ENCODE measurements at regions of chr14 and their contacts with region 1.

Region 1: GRCh38 chr14:24067145-24068082 is 3.9 kb upstream of the CPNE6 start:
- DNase-seq: no peak
- ATAC-seq: no peak
- H3K4me3 Mint-ChIP-seq: no peak overlapping the region
- H3K27ac Mint-ChIP-seq: no peak overlapping the region
- H3K4me1 Mint-ChIP-seq: peaks cover 7% of the 10 kb centered on the region
- H3K27me3 Mint-ChIP-seq: no peaks in the 10 kb centered on the region
- CTCF ChIP-seq: no peak

Region 2: DNA sequence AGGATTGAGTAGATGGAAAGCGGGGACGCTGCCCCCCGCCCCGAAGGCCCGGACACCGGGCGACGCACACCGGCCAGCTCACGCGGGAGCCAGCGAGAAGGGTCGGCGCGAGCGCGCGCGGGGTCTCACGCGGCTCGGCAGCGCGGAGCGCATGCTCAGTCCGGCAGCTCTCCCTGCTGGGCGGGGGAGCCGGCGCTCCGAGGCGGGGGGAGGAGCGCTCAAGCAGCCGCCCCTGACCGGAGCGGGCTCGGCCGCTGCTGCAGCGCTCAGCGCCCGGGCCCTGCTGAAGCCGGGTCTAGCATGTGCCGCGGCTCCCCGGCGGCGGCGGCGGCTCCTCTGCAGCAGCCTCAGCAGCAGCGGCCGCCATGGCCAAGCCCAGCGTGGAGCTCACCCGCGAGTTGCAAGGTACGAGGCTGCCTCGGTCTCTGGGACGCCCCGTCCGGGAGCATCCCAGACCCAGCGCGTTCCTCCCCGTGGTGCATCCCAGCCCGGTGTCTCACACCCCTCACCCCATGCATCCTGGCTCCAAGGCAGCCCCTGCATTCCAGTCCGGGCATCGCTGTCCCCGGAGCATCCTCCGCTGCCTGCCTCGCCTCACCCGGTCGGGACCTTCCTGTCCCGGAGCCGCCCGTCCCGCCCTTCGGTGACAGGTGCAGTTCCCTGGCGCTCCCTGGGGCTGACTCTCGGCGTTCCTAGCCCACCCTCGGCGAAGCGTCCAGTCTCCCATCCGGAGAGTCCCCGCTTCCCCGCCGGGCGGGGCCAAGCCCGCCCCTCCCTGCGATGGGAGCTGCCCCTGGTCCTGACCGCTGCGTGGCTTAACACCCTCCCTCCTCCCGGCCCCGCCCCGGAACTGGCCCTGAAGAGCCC is 15.4 kb before region 1 on chr14 and contains the start of gene CARMIL3:
- CTCF ChIA-PET with region 1: interaction called, 28 read pairs
- POLR2A ChIA-PET with region 1: interaction called, 3 read pairs
- intact Hi-C with region 1: no loop called
- DNase-seq: peak; percentile 65
- ATAC-seq: peak; percentile 60
- H3K4me3 Mint-ChIP-seq: peak within 1 kb of the TSS; percentile 67
- H3K27ac Mint-ChIP-seq: peak within 1 kb of the TSS; percentile 10
- H3K4me1 Mint-ChIP-seq: peaks cover 19% of the 10 kb centered on the region
- H3K27me3 Mint-ChIP-seq: peaks cover 5% of the 10 kb centered on the region
- CTCF ChIP-seq: no peak
- total RNA-seq, gene CARMIL3: 0.63 to 0.83 TPM

Region 3: DNA sequence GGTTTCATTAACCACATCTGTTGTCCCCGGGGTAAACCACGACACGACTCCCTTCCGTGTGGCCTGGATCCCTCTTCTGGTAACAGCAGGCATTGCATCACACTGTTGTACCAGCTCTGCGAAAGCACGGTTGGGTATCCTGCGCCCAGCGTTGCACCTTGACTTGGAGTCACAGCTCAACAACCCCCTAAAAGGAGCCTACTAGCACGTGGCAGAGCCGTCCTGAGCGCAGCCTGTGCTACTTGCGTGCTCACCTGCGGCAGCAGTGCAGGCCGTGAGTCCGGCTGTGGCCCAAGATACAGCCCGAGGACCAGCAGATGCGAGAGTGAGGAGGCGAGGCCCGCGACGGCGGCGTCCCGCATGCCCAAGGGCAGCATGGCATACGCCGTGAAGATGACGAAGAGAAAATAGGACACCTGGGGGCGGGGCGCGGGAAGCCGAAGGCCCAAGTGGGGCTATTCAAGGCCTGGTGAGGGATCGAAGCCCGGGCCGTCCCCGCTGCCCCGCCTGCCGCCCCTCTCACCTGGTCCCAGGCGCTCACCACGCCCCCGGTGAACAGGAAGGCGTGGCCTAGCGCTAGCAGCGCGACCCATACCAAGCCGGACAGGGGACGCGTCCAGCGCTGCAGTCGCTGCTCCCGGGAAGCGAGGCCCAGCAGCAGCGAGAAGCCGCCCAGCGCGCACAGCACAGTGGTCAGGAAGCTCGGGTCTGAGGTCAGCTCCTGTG is 265.0 kb after region 1 on chr14:
- CTCF ChIA-PET with region 1: no interaction called
- POLR2A ChIA-PET with region 1: no interaction called
- intact Hi-C with region 1: no loop called
- DNase-seq: peak; percentile 93
- ATAC-seq: peak; percentile 87
- H3K4me3 Mint-ChIP-seq: peak overlapping the region; percentile 68
- H3K27ac Mint-ChIP-seq: no peak overlapping the region
- H3K4me1 Mint-ChIP-seq: peaks cover 43% of the 10 kb centered on the region
- H3K27me3 Mint-ChIP-seq: peaks cover 29% of the 10 kb centered on the region
- CTCF ChIP-seq: peak; percentile 82